Activated T-helper 2 cell treated with anti-CD3 and anti-CD28 coated beads, Interferon-gamma antibody, Interleukin-2, Interleukin-4, amounts not matched to agents 10 μg/mL and 5 μg/mL and 100 μg/mL, durations not matched to agents 14 hours and 24 hours and 36 hours (primary cell): ENCODE measurements at regions of chrX and their contacts with region 1.

Region 1: DNA sequence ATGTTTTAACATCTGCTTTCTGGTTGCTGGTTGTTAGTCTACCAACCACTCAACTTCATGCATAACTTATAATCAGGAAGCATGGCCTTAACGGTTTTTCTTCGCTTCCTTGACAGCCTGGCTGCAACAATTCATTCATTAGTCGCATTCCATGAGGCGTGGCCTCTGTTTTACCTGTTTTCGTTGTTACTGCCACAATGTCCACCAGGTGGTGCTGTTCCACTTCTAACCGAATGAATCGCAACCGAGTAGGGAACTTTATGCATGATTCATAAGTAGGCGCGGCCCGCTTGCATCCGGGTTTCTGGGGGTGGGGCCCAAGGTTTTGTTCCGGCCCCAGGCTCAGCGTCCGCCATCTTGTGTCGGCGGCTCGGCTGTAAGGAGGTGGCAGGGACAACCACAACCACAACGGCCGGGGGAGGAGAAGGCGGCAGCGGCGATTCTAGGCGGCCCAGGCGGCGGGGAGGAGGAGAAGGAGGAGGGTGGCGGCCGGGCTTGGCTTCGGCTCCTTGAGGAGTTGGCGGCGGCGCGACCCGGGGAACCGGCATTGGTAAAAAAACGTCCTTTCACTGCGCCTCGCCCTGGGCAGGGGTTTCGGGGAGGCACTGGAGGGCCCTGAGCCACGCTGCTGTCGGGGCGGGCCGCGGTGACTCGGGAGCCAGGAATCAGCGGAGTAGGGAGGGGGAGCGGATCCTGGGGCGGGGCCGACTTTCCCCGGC is at the start of gene UBA1:
- DNase-seq: peak; percentile 86
- H3K4me3 Mint-ChIP-seq: peak within 1 kb of the TSS; percentile 97
- H3K27ac Mint-ChIP-seq: peak within 1 kb of the TSS; percentile 96
- H3K4me1 Mint-ChIP-seq: peaks cover 36% of the 10 kb centered on the region
- H3K27me3 Mint-ChIP-seq: no peaks in the 10 kb centered on the region
- total RNA-seq, gene UBA1: 242 and 250 TPM in 2 replicates

Region 2: DNA sequence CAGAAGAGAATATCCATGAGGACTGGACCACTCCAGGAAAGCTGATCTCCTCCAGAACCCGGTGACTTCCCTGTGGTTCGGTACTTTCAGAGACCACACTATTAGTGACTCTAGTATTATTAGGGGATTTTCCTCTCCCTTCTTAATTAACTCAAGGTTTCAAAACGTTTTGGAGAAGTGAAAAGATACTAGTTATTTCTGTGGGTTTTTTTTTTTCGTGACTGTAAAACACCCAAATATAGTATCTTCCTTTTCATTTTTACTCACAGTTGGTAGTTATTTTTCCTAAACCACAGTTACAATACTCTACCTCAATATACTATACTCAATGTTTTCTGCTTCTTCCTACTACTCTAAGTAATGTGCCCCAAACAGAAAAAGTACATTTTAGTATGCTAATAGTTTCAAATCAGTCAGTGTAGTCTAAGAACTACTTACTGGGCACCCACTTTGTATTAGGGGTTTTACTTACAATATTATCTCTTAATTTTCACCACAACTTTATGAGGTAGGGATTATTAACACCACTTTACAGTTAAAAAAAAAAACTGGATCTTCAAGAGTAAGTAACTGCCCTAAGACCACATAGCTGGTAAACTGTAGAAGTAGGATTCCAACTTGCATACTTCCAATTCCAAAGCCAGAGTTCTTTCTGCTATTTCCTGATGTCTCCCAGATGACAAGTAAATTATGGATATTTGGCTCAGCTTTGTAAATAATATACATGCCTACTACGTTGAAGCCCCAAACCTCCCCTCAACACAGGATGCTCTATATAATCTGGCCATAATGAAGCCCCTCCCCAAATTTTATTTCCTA is 479.8 kb before region 1 on chrX:
- intact Hi-C with region 1: no loop called
- DNase-seq: no peak
- H3K4me3 Mint-ChIP-seq: peak overlapping the region; percentile 37
- H3K27ac Mint-ChIP-seq: peak overlapping the region; percentile 92
- H3K4me1 Mint-ChIP-seq: peaks cover 67% of the 10 kb centered on the region
- H3K27me3 Mint-ChIP-seq: no peaks in the 10 kb centered on the region

Region 3: DNA sequence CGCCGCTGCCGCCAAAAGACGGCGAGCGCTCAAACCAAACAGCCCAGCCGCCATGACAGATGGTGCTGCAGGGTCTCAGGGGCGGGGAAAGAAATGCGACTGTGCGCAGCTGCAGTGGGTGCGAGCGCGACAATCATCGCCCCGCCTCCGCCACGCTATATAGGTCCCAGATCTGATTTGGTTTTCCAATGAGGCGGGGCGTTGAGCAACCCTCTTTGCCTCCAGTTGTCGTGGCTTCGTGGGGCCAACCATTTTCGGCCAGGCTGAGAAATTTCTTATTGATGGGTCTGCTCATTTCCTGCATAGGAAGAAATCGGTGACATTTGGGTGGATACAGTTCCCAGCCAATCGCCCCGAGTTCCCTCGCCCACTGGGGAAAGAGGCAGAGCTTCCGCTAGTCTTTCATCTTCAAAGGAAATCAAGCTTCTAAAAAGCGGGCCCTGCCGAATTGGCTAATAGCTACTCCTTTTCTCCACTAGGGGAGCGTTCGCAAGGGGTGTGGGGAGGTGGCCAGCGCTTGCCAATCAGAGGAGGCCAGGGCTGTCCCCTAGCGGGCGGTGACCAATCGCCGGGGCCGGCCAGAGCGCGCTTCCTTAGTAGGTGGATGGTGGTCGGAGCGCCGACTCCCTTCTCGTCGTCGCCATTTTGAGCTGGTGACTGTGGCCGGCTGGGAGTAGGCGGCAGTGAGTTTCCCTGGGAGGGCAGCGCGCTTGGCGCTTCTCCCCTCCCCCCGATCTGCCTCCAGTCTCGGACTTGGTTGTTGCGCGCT is 48.8 kb before region 1 on chrX and contains the starts of genes NDUFB11 and RBM10:
- intact Hi-C with region 1: loop called (anchors 2 kb)
- DNase-seq: peak; percentile 91
- H3K4me3 Mint-ChIP-seq: peak within 1 kb of the TSS; percentile 99
- H3K27ac Mint-ChIP-seq: peak within 1 kb of the TSS; percentile 100
- H3K4me1 Mint-ChIP-seq: peaks cover 19% of the 10 kb centered on the region
- H3K27me3 Mint-ChIP-seq: no peaks in the 10 kb centered on the region
- total RNA-seq, gene NDUFB11: 91.7 and 98.8 TPM in 2 replicates
- total RNA-seq, gene RBM10: 65.7 and 69.2 TPM in 2 replicates

Region 4: GRCh38 chrX:47233337-47234113 is 39.9 kb after region 1 on chrX:
- intact Hi-C with region 1: loop called (anchors 1 kb)
- DNase-seq: peak; percentile 91
- H3K4me3 Mint-ChIP-seq: peak overlapping the region; percentile 86
- H3K27ac Mint-ChIP-seq: peak overlapping the region; percentile 95
- H3K4me1 Mint-ChIP-seq: peaks cover 17% of the 10 kb centered on the region
- H3K27me3 Mint-ChIP-seq: no peaks in the 10 kb centered on the region

Region 5: GRCh38 chrX:47384502-47384901 is 190.9 kb after region 1 on chrX:
- intact Hi-C with region 1: loop called (anchors 1 kb)
- DNase-seq: peak; percentile 46
- H3K4me3 Mint-ChIP-seq: no peak overlapping the region
- H3K27ac Mint-ChIP-seq: no peak overlapping the region
- H3K4me1 Mint-ChIP-seq: peaks cover 16% of the 10 kb centered on the region
- H3K27me3 Mint-ChIP-seq: no peaks in the 10 kb centered on the region

Region 6: DNA sequence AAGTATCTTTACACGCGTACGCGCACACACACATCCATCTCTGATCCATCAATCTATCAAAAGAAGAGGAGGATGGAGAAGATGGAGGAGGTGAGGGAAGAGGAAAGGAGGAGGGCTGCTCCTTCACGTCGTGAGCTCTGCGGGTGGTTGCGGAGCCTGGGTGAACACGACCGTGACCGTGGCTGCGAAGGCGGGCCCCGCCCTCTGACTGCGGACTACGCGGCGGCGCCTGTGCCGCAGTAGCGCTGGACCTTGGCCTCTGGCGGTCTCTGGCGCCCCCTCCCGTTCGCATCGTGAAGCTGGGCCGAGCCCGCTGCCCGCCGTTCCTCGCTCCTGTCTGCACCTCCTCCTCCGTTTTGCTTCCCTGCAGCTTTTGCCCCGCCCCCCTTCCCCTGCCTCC is 329.7 kb after region 1 on chrX:
- intact Hi-C with region 1: loop called (anchors 1 kb)
- DNase-seq: peak; percentile 69
- H3K4me3 Mint-ChIP-seq: peak overlapping the region; percentile 72
- H3K27ac Mint-ChIP-seq: no peak overlapping the region
- H3K4me1 Mint-ChIP-seq: peaks cover 4% of the 10 kb centered on the region
- H3K27me3 Mint-ChIP-seq: peaks cover 2% of the 10 kb centered on the region